ENCODE measurements at regions of chr5 and their contacts with region 1.

Region 1: DNA sequence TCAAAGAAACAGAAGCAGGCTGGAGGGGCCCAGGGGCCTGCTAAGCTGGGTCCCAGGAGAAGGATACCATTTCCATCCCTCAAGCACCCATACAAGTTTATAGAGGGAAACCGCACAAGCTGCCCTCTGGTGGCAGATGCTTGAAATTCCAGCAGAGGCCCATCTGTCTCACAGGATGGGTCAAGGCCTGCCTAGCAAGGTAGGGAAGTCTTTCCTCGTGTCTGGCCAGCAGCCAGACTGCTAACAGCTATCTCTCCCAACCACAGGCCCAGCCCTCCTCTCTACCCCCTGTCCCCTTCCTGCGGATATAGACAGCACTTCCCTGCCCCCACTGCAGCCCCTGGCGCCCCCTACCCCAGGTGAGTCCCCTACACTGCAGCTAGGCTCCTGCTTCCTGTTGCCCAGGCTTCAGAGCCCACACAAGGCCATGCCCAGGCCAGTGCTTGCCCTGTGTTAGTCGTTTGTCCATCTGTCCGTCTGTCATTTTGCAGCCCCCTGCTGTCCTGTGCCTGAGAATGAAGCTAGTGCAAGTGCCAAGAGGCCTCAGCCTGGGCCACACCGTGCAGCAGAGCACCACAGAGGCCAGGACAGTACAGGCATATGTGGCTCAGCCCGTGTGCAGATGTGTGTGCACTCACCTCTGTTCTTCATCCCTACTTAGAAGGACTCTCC is 26.2 kb downstream of the TCF7 start:
- DNase-seq: peak; percentile 80
- ATAC-seq: peak; percentile 83
- H3K4me3 Mint-ChIP-seq: no peak overlapping the region
- H3K27ac Mint-ChIP-seq: peak overlapping the region; percentile 86; the same call in 1 of the 2 replicates
- H3K4me1 Mint-ChIP-seq: peaks cover 14% of the 10 kb centered on the region
- H3K27me3 Mint-ChIP-seq: no peaks in the 10 kb centered on the region
- CTCF ChIP-seq: peak; percentile 72

Region 2: DNA sequence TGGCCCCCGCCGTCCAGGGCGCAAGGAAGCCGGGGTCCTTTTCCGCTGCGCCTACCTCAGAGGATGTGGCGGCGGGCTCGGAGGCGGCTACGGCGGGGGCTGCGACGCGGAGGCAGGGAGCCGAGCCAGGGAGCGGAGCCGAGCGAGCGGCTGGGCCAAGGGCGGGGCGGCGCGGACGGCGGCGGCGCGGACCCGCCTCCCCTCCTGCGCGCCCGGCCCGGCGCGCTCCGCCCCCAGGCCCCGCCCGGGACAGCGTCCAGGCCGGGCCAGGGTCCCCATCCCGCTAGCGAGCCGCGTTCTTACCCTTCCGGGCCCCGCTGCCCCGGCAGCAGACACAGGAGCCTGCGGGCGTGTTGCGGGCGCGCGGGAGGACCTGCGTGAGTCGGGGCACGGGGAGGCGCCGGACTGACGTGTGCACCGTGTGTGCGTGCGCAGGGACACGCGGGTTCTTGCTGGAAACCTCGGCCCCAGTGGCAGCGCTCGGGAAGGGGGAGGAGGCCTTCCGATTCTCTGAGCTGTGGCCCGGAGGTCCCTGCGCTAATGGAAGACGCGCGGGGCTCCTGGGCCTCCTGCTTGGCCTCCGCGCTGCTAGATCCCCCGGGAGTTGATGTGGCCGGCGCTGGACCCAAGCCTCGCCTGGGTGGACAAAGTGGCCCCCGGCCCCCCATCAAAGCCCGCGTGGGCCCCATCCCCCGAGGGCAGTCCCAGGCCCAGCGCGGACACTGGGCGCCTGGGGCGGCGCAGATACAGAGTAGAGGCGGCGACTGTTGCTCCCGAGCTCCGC is 135.9 kb before region 1 on chr5 and contains the start of gene VDAC1:
- CTCF ChIA-PET with region 1: interaction called, 18 read pairs
- POLR2A ChIA-PET with region 1: no interaction called
- DNase-seq: peak; percentile 74
- ATAC-seq: peak; percentile 76
- H3K4me3 Mint-ChIP-seq: peak within 1 kb of the TSS; percentile 90
- H3K27ac Mint-ChIP-seq: peak within 1 kb of the TSS; percentile 94
- H3K4me1 Mint-ChIP-seq: peaks cover 56% of the 10 kb centered on the region
- H3K27me3 Mint-ChIP-seq: no peaks in the 10 kb centered on the region
- CTCF ChIP-seq: no peak
- total RNA-seq, gene VDAC1: 266 to 274 TPM (median 268 TPM) in 3 replicates

Region 3: GRCh38 chr5:134046801-134047686 is 93.6 kb before region 1 on chr5:
- CTCF ChIA-PET with region 1: interaction called, 25 read pairs
- POLR2A ChIA-PET with region 1: no interaction called
- DNase-seq: no peak
- ATAC-seq: peak; percentile 38
- H3K4me3 Mint-ChIP-seq: no peak overlapping the region
- H3K27ac Mint-ChIP-seq: no peak overlapping the region
- H3K4me1 Mint-ChIP-seq: peaks cover 30% of the 10 kb centered on the region
- H3K27me3 Mint-ChIP-seq: peaks cover 49% of the 10 kb centered on the region
- CTCF ChIP-seq: no peak

Region 4: GRCh38 chr5:134101686-134102439 is 38.8 kb before region 1 on chr5:
- CTCF ChIA-PET with region 1: interaction called, 68 read pairs
- POLR2A ChIA-PET with region 1: no interaction called
- DNase-seq: peak; percentile 87
- ATAC-seq: peak; percentile 73
- H3K4me3 Mint-ChIP-seq: no peak overlapping the region; the same call in 1 of the 2 replicates
- H3K27ac Mint-ChIP-seq: no peak overlapping the region
- H3K4me1 Mint-ChIP-seq: peaks cover 48% of the 10 kb centered on the region
- H3K27me3 Mint-ChIP-seq: peaks cover 52% of the 10 kb centered on the region
- CTCF ChIP-seq: peak; percentile 85

Region 5: GRCh38 chr5:134125039-134126015 is 15.3 kb before region 1 on chr5:
- CTCF ChIA-PET with region 1: interaction called, 22 read pairs
- POLR2A ChIA-PET with region 1: no interaction called
- DNase-seq: no peak
- ATAC-seq: no peak
- H3K4me3 Mint-ChIP-seq: no peak overlapping the region
- H3K27ac Mint-ChIP-seq: no peak overlapping the region
- H3K4me1 Mint-ChIP-seq: no peaks in the 10 kb centered on the region
- H3K27me3 Mint-ChIP-seq: no peaks in the 10 kb centered on the region
- CTCF ChIP-seq: no peak

Measured in WTC11 (cell line).